ENCODE measurements at regions of chr1 and their contacts with region 1.

Region 1: GRCh38 chr1:27772933-27773825 is at the start of gene STX12:
- DNase-seq: peak; percentile 100
- ATAC-seq: peak; percentile 99
- H3K4me3 Mint-ChIP-seq: peak within 1 kb of the TSS; percentile 96
- H3K27ac Mint-ChIP-seq: peak within 1 kb of the TSS; percentile 97
- H3K4me1 Mint-ChIP-seq: peaks cover 30% of the 10 kb centered on the region
- H3K27me3 Mint-ChIP-seq: no peaks in the 10 kb centered on the region
- total RNA-seq, gene STX12: 21.8 to 23.9 TPM

Region 2: DNA sequence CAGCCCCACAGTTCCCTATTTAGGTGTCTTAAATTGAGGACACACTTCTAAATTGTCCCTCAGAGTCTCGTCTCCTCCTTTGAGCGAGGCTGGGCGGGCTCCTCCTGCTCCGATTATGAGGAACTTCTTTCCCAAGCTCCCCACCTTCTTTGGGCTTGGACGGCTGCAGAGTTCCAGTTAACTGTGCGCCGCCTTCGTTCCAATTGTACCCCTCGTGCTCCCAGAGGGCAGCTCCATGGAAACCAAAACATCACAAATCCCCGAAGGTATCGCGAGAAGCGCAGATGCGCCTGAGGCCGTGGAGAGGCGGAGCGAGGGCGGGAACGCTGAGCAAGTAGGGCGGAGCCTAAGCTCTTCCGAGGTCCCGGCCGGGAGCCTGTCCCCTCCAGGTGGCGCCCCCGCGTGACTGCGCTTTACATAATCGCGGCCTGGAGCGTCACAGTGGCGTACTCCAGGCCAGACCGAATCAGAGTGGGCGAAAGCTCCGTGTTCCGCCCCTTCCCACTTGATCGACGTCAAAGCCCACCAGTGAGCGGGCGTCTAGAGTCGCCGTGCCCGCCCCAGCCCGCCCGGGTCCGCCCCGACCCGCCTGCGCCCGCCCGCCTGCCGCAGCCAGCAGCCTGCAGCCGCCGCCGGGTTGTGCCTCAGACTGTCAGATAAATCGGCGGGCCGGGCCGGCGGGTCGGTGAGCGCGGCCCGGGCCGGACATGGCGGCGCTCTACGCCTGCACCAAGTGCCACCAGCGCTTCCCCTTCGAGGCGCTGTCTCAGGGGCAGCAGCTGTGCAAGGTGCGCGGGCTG is 47.6 kb before region 1 on chr1 and contains the start of gene FAM76A:
- CTCF ChIA-PET with region 1: interaction called, 31 read pairs
- POLR2A ChIA-PET with region 1: interaction called, 27 read pairs
- DNase-seq: peak; percentile 100
- ATAC-seq: peak; percentile 94
- H3K4me3 Mint-ChIP-seq: peak within 1 kb of the TSS; percentile 86
- H3K27ac Mint-ChIP-seq: peak within 1 kb of the TSS; percentile 93
- H3K4me1 Mint-ChIP-seq: peaks cover 21% of the 10 kb centered on the region
- H3K27me3 Mint-ChIP-seq: no peaks in the 10 kb centered on the region
- total RNA-seq, gene FAM76A: 14.6 to 17.5 TPM

Region 3: DNA sequence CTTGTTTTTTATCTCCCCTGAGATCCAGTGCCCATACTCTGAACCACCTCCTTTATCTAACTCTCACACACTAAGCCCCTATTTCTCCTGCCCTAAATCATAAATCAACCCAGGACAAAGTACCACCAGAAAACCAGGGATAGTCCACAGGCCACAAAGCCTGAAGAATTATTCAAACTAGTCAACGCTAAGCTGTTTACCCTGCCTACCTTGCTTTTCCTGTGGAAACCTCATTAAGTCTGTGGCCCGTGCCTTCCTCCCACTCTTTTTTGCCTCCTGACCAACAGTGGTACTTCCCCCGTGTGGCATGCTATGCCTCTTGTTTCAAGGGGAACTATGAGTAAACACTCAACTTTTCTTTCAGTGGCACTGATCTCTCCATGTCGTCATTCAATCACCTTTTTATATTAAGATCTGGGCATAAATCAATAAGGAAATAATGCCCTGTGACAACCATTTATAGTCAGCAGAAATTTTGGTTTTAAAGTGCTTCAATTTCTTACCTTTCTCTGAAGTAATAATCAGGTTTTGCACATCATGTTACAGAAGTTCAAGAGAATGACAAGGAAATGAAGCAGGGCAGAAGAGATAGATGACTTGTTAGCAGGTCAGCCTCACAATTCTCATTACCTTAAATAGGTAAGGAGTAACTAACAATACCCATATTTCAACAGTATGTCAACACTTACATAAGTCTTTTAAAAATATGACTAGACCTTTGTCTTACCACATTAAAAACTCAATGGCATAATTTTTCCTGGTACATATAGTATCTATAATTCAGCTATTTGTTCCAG is 283.1 kb after region 1 on chr1:
- CTCF ChIA-PET with region 1: no interaction called
- POLR2A ChIA-PET with region 1: no interaction called
- DNase-seq: peak; percentile 66
- ATAC-seq: peak; percentile 93
- H3K4me3 Mint-ChIP-seq: peak overlapping the region; percentile 5
- H3K27ac Mint-ChIP-seq: peak overlapping the region; percentile 73
- H3K4me1 Mint-ChIP-seq: peaks cover 39% of the 10 kb centered on the region
- H3K27me3 Mint-ChIP-seq: no peaks in the 10 kb centered on the region

Measured in activated CD8-positive, alpha-beta T cell treated with anti-CD3 and anti-CD28 coated beads, Interleukin-2, amount 10 ng/mL, durations not matched to agents 7 days and 5 days (primary cell).